CD14-positive monocyte (primary cell): ENCODE measurements at regions of chr17 and their contacts with region 1.

Region 1: DNA sequence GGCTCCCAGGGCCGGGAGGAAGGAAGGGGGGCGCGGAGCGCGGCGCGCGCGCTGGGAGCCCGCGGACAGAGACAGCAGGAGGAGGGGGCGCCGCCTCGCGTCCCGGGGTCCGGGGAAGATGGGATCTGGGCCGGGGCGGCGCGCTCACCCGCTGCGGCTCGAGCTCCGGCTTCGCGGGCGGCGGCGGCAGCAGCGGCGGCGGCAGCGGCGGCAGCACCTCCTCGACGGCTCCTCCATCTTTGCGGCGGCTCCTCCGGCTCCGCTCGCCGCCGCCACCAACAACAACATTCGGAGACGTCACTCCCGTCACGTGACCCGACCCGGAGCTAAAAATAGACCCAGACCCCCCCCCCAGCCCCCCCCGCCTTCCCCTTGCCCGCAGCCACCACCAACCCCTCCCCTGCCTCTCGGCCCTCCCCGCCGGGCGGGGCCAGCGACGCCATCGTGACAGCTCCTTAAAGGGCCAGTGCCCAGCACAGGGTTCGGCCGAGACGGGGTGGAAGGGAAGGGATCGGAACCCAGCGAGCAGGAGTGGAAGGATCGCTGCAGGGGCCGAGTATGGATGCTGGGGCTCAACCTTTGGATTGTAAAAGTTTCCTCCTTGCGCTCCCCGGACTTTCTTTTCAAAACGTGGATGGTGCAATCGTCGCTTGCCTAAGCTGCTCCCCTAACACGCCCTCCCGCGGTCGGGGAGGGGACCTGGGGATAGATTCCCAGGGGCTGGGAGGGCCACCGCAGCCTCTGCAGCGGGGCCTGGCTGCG is at the start of gene HDAC5:
- DNase-seq: peak; percentile 92 to 94 (median 93)
- H3K4me3 ChIP-seq: peak within 1 kb of the TSS; percentile 93 to 97 (median 95)
- H3K4me3 Mint-ChIP-seq: peak within 1 kb of the TSS; percentile 92 to 95
- H3K27ac ChIP-seq: peak within 1 kb of the TSS; percentile 98
- H3K27ac Mint-ChIP-seq: peak within 1 kb of the TSS; percentile 98 to 100 (median 99)
- H3K4me1 ChIP-seq: peaks cover 21 to 26% of the 10 kb centered on the region in 2 donors
- H3K4me1 Mint-ChIP-seq: peaks cover 26% of the 10 kb centered on the region
- H3K27me3 ChIP-seq: no peaks in the 10 kb centered on the region
- H3K27me3 Mint-ChIP-seq: peaks cover 3 to 5% (median 3%) of the 10 kb centered on the region in 3 donors
- CTCF ChIP-seq: peak; percentile 66
- polyA plus RNA-seq, gene HDAC5: 16.1 to 93.6 (median 24.7) TPM

Region 2: GRCh38 chr17:44070455-44071197 is 52.9 kb before region 1 on chr17 and contains the start of gene G6PC3:
- intact Hi-C with region 1: loop called in 1 of 2 experiments (anchors 2 kb)
- DNase-seq: peak; percentile 87 to 92 (median 89)
- H3K4me3 ChIP-seq: peak within 1 kb of the TSS; percentile 45 to 84 (median 65)
- H3K4me3 Mint-ChIP-seq: peak within 1 kb of the TSS; percentile 89 to 94
- H3K27ac ChIP-seq: peak within 1 kb of the TSS; percentile 86
- H3K27ac Mint-ChIP-seq: peak within 1 kb of the TSS; percentile 87 to 97 (median 94)
- H3K4me1 ChIP-seq: peaks cover 46 to 56% of the 10 kb centered on the region in 2 donors
- H3K4me1 Mint-ChIP-seq: peaks cover 49% of the 10 kb centered on the region
- H3K27me3 ChIP-seq: no peaks in the 10 kb centered on the region
- H3K27me3 Mint-ChIP-seq: peaks cover 0 to 1% (median 0%) of the 10 kb centered on the region in 3 donors
- CTCF ChIP-seq: no peak
- polyA plus RNA-seq, gene G6PC3: 38.0 to 46.4 (median 42.4) TPM

Region 3: DNA sequence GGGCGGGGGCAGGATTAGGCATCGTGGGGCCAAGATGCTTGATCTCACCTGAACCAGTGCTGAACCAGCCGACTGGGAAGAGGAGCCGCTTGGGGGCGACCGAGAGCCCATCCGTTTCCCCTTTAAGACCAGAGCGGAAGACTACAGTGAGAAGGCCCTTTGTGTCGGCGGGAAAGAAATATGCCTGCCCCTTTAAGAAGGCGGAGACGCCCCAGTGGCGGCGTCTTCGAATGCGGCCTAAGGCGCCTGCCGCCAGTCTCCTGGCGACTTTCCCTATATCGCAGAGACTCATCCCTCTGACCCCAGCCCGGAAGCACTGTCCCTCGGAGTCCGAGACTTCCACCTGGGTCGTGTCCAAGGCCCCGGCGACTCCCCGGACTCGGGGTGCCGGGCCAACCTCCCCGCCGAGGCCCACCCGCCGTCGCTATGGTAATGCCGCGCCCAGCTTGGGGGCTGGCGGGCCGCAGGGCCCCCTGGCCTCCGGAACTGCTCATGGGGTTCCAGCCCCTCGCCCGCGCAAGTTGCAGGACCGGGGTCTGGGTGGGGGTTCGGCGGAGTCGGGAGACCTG is 18.3 kb after region 1 on chr17 and contains the start of gene HROB:
- intact Hi-C with region 1: loop called (anchors 2 kb)
- DNase-seq: peak; percentile 93 to 96 (median 96)
- H3K4me3 ChIP-seq: peak within 1 kb of the TSS; percentile 42 to 92 (median 60)
- H3K4me3 Mint-ChIP-seq: peak within 1 kb of the TSS; percentile 79 to 85
- H3K27ac ChIP-seq: peak within 1 kb of the TSS in 1 of 2 donors; percentile 81
- H3K27ac Mint-ChIP-seq: peak within 1 kb of the TSS; percentile 70 to 92 (median 84)
- H3K4me1 ChIP-seq: peaks cover 12 to 23% of the 10 kb centered on the region in 2 donors
- H3K4me1 Mint-ChIP-seq: peaks cover 27% of the 10 kb centered on the region
- H3K27me3 ChIP-seq: no peaks in the 10 kb centered on the region
- H3K27me3 Mint-ChIP-seq: peaks cover 4 to 5% (median 5%) of the 10 kb centered on the region in 3 donors
- CTCF ChIP-seq: peak; percentile 92
- polyA plus RNA-seq, gene HROB: 0.17 to 0.32 (median 0.20) TPM

Region 4: GRCh38 chr17:44324571-44325275 is 201.2 kb after region 1 on chr17 and contains the start of gene SLC25A39:
- intact Hi-C with region 1: loop called in 1 of 2 experiments (anchors 10 kb)
- DNase-seq: peak; percentile 91 to 93 (median 92)
- H3K4me3 ChIP-seq: peak within 1 kb of the TSS; percentile 47 to 85 (median 71)
- H3K4me3 Mint-ChIP-seq: peak within 1 kb of the TSS; percentile 89 to 92
- H3K27ac ChIP-seq: peak within 1 kb of the TSS; percentile 71 to 87
- H3K27ac Mint-ChIP-seq: peak within 1 kb of the TSS; percentile 92 to 96 (median 95)
- H3K4me1 ChIP-seq: peaks cover 29 to 39% of the 10 kb centered on the region in 2 donors
- H3K4me1 Mint-ChIP-seq: peaks cover 34% of the 10 kb centered on the region
- H3K27me3 ChIP-seq: no peaks in the 10 kb centered on the region
- H3K27me3 Mint-ChIP-seq: no peaks in the 10 kb centered on the region
- CTCF ChIP-seq: no peak
- polyA plus RNA-seq, gene SLC25A39: 64.0 to 74.8 (median 64.5) TPM